Brain microvascular endothelial cell (primary cell): ENCODE measurements at regions of chr16 and their contacts with region 1.

Region 1: GRCh38 chr16:54929090-54930004 is 1.3 kb upstream of the IRX5 start:
- DNase-seq: peak; percentile 99
- H3K4me3 ChIP-seq: peak overlapping the region; percentile 68
- H3K27ac ChIP-seq: peak overlapping the region; percentile 68
- H3K27me3 ChIP-seq: peaks cover 26% of the 10 kb centered on the region
- CTCF ChIP-seq: peak; percentile 39

Region 2: DNA sequence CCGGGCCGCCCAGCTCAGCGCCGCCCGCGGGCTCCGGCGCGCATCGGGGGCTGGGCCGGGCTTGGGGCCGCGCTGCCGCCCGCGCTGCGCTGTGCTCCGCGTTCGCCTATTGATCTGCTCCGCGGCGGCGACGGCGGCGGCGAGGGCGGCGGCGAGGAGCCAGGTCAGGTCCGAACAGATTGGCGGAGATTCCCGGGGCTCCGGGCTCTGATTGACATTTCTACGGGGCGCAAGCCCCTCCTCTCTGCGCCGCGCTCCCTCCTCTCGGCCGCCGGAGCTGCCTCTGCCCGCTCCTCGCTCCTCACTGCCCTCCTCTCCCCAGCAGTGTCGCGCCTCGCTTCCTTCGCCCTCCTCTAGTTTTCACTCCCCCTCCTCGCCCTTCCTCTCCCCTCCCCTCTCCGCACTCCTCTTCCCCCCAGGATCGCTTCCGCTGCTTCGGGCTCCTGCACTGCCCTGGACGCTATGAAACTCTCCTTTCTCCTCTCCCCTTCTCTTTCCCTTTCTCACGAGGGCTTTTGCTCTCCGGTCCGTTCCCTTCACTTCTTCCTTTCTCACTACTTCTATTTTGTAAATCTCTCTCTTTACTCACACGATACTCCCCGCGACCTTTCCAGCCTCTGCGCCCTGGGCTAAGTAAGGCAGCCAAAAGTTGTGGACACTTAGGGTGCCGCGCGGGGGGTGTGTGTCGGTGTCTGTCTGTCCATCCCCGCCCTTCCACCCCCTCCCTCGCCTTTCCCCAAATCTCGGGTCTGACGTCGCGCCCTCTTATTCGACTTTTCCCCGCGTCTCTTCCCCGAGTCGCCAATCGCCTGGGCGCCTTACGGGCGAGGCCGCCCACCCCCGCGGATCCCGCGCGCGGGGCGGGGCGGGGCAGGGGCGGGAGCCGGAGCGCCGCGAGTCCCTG is 643.0 kb before region 1 on chr16 and contains the start of gene IRX3:
- in situ Hi-C with region 1: loop called (anchors 25 kb)
- DNase-seq: peak; percentile 63
- H3K4me3 ChIP-seq: peak within 1 kb of the TSS; percentile 64
- H3K27ac ChIP-seq: no peak within 1 kb of the TSS
- H3K27me3 ChIP-seq: peaks cover 81% of the 10 kb centered on the region
- CTCF ChIP-seq: no peak

Region 3: DNA sequence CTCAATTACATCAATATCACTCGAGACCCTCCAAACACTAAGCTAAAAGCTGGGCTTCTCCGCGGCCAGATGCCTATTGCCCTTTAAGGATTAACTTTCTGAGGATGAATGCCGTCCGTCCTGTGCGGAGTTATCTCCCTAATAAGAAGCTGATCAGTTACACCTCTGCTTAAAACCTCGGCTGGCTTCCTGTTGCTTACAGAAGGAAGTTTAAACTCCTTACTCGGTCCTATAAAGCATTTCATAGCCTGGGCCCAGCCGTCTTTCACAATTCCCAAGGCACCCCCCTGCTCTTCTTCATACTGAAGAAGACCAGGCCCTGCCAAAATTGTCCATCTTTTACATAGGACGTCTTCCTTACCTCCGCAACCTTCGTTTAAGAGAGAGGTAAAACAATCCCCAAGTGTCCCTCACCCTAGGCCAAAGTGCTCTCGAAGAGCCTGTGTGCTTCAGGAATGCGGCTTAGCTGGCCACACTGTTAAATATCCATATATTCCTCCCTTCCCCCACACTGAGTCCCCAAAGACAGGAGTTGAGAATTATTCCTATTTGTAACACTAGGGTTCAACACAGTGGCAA is 111.3 kb before region 1 on chr16:
- in situ Hi-C with region 1: no loop called
- DNase-seq: no peak
- H3K4me3 ChIP-seq: no peak overlapping the region
- H3K27ac ChIP-seq: no peak overlapping the region
- H3K27me3 ChIP-seq: no peaks in the 10 kb centered on the region
- CTCF ChIP-seq: no peak